Heart left ventricle (tissue), 16 donors: ENCODE measurements at regions of chr18 and their contacts with region 1.

Region 1: GRCh38 chr18:67043276-67043675 is 439.4 kb upstream of the CDH19 start:
- DNase-seq: peak in 1 of 5 donors; percentile 35
- ATAC-seq: no peak
- H3K4me3 ChIP-seq: no peak overlapping the region
- H3K27ac ChIP-seq: no peak overlapping the region
- H3K4me1 ChIP-seq: no peaks in the 10 kb centered on the region
- H3K27me3 ChIP-seq: no peaks in the 10 kb centered on the region
- CTCF ChIP-seq: no peak
- POLR2A ChIP-seq: no peak

Region 2: GRCh38 chr18:67023059-67023458 is 20.2 kb before region 1 on chr18:
- intact Hi-C with region 1: loop called in 1 of 10 experiments (anchors 2 kb)
- DNase-seq: no peak
- ATAC-seq: no peak
- H3K4me3 ChIP-seq: no peak overlapping the region
- H3K27ac ChIP-seq: no peak overlapping the region
- H3K4me1 ChIP-seq: no peaks in the 10 kb centered on the region
- H3K27me3 ChIP-seq: no peaks in the 10 kb centered on the region
- CTCF ChIP-seq: no peak
- POLR2A ChIP-seq: no peak

Region 3: GRCh38 chr18:67104700-67105284 is 61.5 kb after region 1 on chr18:
- intact Hi-C with region 1: no loop called
- DNase-seq: peak in 2 of 5 donors; percentile 38 to 49
- ATAC-seq: peak in 3 of 4 donors; percentile 60 to 74 (median 65)
- H3K4me3 ChIP-seq: no peak overlapping the region
- H3K27ac ChIP-seq: no peak overlapping the region
- H3K4me1 ChIP-seq: no peaks in the 10 kb centered on the region
- H3K27me3 ChIP-seq: no peaks in the 10 kb centered on the region
- CTCF ChIP-seq: peak; percentile 24 to 68 (median 48)
- POLR2A ChIP-seq: no peak